ENCODE measurements at regions of chr17 and their contacts with region 1.

Region 1: DNA sequence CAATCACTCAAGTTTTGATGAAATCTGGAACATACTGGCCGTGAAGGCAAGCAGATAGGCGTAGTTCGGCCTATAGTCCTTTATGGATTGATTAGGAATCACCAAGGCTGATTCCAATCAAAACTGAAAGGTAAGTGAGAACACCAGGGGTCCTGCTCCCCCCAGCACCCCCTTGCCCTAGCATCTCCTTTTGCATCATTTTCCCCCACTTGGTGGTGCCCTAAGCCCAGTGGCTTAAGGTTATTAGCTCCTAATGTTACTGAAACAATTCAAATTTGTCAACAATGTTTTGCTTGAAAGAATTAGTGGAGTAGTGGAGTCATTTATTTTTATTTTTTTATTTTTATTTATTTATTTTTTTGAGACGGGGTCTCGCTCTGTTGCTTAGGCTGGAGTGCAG is 4.9 kb downstream of the SLFN14 start:
- DNase-seq: peak; percentile 47 to 62 (median 50)
- ATAC-seq: peak; percentile 65
- H3K4me3 ChIP-seq: no peak overlapping the region
- H3K27ac ChIP-seq: no peak overlapping the region
- H3K4me1 ChIP-seq: peaks cover 4 to 24% of the 10 kb centered on the region in 2 experiments
- H3K27me3 ChIP-seq: no peaks in the 10 kb centered on the region
- CTCF ChIP-seq: peak; percentile 55 to 73 (median 68); a peak in 5 of 6 replicates
- EP300 ChIP-seq: no peak
- POLR2A ChIP-seq: no peak
- RAD21 ChIP-seq: peak; percentile 53 to 69

Region 2: DNA sequence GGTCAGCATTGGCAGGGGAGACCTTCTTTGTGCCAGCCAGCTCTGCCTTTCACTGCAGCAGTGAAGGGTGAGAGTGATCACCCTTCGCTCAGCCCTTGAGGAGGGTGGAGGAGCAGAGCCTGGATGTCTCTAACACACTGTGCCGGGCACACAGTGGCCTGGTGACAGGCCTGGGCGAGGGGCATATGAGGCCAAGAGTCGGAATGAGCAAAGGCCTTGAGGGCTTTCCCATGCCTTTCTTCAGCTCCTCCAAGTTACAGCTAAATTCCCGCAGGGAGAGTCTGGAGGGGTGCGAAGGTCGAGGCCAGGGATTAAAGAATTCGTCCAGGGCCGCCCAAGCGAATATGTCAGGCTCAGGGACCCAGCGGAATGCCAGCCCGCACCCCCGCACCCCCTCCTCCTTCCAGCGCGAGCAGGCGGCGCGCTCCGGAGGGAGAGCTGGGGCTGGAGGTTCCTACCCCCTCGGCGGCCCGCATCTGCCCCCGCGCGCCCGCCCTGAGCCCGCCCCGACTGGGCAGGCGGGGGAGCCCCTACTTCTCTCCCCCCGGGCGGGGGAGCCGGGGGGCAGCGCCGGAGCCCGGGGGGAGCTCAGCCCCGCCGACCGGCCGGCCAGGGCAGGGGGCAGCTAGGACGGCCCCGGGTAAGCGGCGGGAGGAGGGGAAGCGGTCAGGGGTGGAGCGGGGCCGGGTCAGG is 175.7 kb after region 1 on chr17 and contains the start of gene RASL10B:
- CTCF ChIA-PET with region 1: no interaction called
- POLR2A ChIA-PET with region 1: interaction called, 3 read pairs
- in situ Hi-C with region 1: no loop called
- intact Hi-C with region 1: loop called (anchors 5 kb)
- DNase-seq: peak; percentile 56 to 93 (median 84)
- ATAC-seq: peak; percentile 89
- H3K4me3 ChIP-seq: peak within 1 kb of the TSS; percentile 41
- H3K27ac ChIP-seq: no peak within 1 kb of the TSS
- H3K4me1 ChIP-seq: peaks cover 3 to 17% of the 10 kb centered on the region in 2 experiments; a peak in 3 of 5 replicates
- H3K27me3 ChIP-seq: peaks cover 19 to 44% of the 10 kb centered on the region in 2 experiments; a peak in 4 of 5 replicates
- CTCF ChIP-seq: no peak
- EP300 ChIP-seq: no peak
- POLR2A ChIP-seq: no peak
- RAD21 ChIP-seq: no peak
- polyA plus RNA-seq, gene RASL10B: not detected